Right ventricle myocardium inferior (tissue), 1 donor: ENCODE measurements at regions of chr7 and their contacts with region 1.

Region 1: GRCh38 chr7:17640730-17641377 is 299.4 kb downstream of the SNX13 start:
- DNase-seq: no peak
- ATAC-seq: no peak

Region 2: DNA sequence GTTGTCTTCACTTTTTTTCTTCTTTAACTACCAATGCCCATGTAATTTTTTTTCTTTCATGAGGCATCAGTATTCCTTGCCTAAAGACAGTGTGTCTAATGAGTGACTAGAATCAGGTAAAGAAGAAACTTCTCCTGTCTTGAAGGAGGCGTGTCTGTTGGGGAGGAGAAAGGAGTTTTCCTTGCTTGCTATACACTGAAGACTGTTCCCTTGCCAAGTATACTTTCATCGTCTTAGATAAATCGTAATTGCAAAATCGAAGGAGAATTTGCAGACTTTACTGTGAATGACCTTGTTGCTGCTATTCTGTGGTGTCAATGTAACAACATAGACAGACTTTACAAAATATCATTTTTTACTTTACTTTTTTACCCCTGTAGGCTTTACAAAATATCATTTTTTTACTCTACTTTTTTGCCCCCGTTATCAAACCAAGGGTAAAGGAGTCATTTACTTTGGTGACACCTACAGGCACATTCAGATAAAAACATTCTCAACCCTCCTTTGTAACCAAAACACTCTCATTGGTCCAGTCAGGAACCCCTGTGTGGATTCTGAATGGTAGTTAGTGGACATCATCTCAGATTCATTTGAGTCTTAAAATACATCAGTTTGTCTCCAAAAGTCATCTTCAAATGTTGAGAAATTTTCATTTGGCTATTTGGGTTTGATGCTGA is 110.0 kb before region 1 on chr7:
- intact Hi-C with region 1: loop called (anchors 10 kb)
- DNase-seq: no peak
- ATAC-seq: no peak

Region 3: DNA sequence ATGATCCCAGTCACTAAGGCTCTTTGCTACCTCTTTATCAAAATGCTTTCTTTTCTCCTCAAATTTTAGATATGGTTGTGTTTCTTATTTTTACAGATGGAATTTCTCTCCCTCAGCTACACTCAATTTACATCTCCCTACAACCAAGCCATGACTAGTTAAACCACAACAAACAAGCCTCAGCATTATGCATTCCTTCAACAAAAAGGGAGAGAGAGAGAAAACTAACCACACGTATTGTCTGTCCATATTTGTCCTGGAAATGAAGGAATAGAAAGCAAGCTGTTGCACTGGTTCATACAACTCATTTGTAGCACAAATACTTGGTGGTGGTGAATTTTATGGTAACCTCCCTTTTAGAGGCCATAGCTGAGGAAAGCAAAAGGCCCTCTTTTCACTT is 56.0 kb before region 1 on chr7:
- intact Hi-C with region 1: no loop called
- DNase-seq: no peak
- ATAC-seq: no peak